Activated naive CD4-positive, alpha-beta T cell treated with anti-CD3 and anti-CD28 coated beads for 36 hours (primary cell): ENCODE measurements at regions of chr19 and their contacts with region 1.

Region 1: DNA sequence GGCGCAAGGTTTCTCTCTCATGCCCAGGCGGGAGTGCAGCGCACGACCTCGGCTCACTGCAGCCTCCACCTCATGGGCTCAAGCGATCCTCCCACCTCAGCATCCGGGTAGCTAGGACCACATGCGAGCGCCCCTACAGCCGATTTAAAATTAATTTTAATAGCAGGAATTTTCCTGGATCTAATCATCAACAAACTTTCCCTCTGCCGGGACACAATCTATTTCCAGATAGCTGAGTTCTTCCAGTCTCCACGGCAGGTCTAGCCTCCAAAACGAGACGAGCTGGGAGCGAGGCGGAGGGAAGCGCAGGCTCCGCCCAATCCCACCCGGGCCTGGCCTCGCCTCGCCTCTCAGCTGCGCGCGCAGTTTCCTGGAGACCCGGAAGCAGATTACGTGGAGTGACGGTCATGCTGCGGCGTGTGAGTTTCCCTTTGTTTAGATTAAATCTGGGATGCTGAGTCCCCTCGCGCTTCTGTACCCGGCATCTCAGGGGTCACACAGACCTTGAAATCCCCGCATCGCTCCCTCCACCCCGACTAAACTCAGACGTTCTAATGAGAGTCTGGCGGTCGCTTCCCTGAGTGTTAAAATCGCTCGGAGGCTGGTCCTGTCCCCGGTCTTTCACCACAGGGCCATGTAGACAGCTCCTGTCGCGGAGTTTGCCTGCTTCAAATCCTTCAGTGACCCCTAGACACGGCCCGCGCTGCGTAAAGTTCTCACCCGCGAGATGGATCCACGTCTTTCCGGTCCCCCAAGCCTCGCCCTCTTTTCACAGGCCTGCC is at the start of gene ZNF880:
- DNase-seq: peak; percentile 94
- H3K4me3 Mint-ChIP-seq: peak within 1 kb of the TSS; percentile 91
- H3K27ac Mint-ChIP-seq: peak within 1 kb of the TSS; percentile 95
- H3K4me1 Mint-ChIP-seq: peaks cover 10% of the 10 kb centered on the region
- H3K27me3 Mint-ChIP-seq: no peaks in the 10 kb centered on the region
- total RNA-seq, gene ZNF880: 8.3 to 8.4 TPM

Region 2: GRCh38 chr19:52397310-52398080 is 27.7 kb after region 1 on chr19 and contains the start of gene ZNF528:
- CTCF ChIA-PET with region 1: no interaction called
- intact Hi-C with region 1: loop called (anchors 2 kb)
- DNase-seq: peak; percentile 95
- H3K4me3 Mint-ChIP-seq: peak within 1 kb of the TSS; percentile 76
- H3K27ac Mint-ChIP-seq: peak within 1 kb of the TSS; percentile 75
- H3K4me1 Mint-ChIP-seq: peaks cover 15% of the 10 kb centered on the region
- H3K27me3 Mint-ChIP-seq: no peaks in the 10 kb centered on the region
- total RNA-seq, gene ZNF528: 2.9 to 3.7 TPM

Region 3: GRCh38 chr19:52453324-52454094 is 83.8 kb after region 1 on chr19 and contains the start of gene ZNF578:
- CTCF ChIA-PET with region 1: no interaction called
- intact Hi-C with region 1: no loop called
- DNase-seq: peak; percentile 87
- H3K4me3 Mint-ChIP-seq: peak within 1 kb of the TSS; percentile 74
- H3K27ac Mint-ChIP-seq: no peak within 1 kb of the TSS
- H3K4me1 Mint-ChIP-seq: peaks cover 15% of the 10 kb centered on the region
- H3K27me3 Mint-ChIP-seq: peaks cover 2% of the 10 kb centered on the region
- total RNA-seq, gene ZNF578: 0.32 to 0.36 TPM